ENCODE measurements at regions of chr10 and their contacts with region 1.

Region 1: DNA sequence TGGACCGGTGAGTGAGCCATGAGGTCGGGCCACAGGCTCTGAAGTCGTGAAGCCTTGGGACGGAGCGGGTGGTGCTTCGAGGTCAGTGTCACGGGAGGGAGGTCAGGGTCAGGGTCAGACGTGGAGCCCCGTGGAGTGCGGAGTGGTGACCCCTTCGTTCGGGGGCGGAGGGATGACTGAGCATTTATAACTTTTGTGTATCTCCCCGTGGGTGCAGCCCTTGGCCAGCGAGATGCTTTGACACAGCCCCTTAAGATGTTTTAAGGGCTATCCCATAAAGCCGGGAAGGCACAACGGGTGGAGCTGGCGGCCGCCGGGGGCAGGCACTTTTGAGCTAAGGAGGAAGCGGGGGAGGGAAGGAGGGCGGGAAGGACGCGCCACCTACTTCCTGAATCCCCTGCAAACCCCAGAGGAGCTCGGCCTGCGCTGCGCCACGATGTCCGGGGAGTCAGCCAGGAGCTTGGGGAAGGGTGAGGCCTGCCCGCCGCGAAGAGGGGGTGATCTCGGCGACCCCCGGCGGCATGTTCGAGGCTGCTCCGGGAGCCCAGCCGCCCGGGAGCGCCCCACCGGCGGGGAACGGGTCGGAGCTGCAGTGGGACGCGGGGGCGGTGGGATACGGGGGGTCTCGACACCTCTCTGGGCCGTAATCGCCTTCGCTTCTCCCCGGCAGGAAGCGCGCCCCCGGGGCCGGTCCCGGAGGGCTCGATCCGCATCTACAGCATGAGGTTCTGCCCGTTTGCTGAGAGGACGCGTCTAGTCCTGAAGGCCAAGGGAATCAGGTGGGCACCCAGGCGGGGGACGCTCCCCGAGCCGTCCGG is at the start of gene GSTO1:
- DNase-seq: peak; percentile 77
- CTCF ChIP-seq: no peak

Region 2: GRCh38 chr10:104242545-104242944 is 12.2 kb before region 1 on chr10:
- CTCF ChIA-PET with region 1: interaction called, 11 read pairs
- POLR2A ChIA-PET with region 1: no interaction called
- DNase-seq: no peak
- CTCF ChIP-seq: no peak

Region 3: GRCh38 chr10:104268716-104269645 is 14.3 kb after region 1 on chr10 and contains the start of gene GSTO2:
- CTCF ChIA-PET with region 1: interaction called, 53 read pairs
- POLR2A ChIA-PET with region 1: interaction called, 5 read pairs
- DNase-seq: peak; percentile 100
- CTCF ChIP-seq: no peak

Region 4: DNA sequence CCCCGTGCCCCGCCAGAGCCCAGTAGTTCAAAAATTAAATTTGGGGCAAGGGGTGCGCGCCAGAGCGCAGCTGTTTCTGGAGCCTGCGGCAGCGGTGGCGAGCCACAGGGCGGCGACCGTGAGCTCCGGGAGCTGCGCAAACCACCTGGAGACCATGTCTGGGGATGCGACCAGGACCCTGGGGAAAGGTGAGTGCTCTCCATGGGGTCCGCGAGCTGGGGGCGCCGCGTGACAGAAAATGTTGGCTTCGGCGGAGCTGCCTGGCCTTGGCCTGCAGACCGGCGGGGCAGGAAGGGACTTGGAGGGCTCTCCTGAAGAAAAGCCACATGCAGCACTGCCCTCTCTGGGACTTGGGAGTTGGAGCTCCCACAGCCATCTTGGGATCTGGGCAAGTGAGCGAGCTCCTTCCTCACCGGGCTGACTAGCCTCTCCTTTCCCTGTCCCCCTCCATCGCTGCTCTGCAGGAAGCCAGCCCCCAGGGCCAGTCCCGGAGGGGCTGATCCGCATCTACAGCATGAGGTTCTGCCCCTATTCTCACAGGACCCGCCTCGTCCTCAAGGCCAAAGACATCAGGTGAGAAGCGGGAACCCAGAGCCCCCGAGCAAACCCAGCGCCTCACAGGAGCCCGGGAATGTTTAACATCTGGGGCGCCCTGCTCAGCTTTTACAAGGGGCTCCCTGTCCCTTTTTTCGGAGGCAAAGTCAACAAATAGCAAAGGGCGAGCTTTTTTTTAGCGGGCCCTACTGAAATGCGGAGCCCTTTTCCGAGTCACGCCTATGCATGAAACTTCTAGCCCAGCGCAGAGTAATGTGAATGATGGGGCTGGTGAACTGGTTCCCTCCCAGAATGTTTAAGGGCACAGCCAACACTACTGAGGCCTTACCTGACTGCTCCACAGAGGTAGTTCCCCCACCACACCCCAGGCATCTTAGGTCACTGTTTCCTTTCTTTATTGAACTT is 20.3 kb after region 1 on chr10:
- CTCF ChIA-PET with region 1: interaction called, 53 read pairs
- POLR2A ChIA-PET with region 1: no interaction called
- DNase-seq: peak; percentile 73
- CTCF ChIP-seq: peak; percentile 76

Measured in GM10248 (cell line).